ENCODE measurements at regions of chr15 and their contacts with region 1.

Region 1: GRCh38 chr15:52261498-52262242 is 33.9 kb downstream of the MYO5C start:
- DNase-seq: peak; percentile 43
- H3K4me3 ChIP-seq: no peak overlapping the region
- H3K27me3 ChIP-seq: no peaks in the 10 kb centered on the region
- CTCF ChIP-seq: peak; percentile 33

Region 2: DNA sequence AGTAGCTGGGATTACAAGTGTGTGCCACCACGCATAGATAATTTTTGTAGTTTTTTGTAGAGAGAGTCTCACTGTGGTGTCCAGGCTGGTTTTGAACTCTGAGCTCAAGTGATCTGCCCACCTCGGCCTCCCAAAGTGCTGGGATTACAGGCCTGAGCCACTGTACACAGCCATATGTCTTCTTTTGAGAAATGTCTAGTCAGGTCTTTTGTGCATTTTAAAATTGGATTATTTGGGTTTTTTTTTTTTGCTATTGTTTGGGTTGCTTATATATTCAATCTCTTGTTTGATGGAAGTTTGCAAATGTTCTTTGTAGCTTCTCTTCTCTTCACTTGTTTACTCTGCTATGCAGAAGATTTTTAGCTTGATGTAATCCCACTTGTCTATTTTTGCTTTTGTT is 313.4 kb after region 1 on chr15:
- CTCF ChIA-PET with region 1: no interaction called
- POLR2A ChIA-PET with region 1: interaction called, 10 read pairs
- DNase-seq: no peak
- H3K4me3 ChIP-seq: no peak overlapping the region
- H3K27me3 ChIP-seq: no peaks in the 10 kb centered on the region
- CTCF ChIP-seq: no peak

Measured in BJ (cell line).